ENCODE measurements at regions of chr9 and their contacts with region 1.

Region 1: DNA sequence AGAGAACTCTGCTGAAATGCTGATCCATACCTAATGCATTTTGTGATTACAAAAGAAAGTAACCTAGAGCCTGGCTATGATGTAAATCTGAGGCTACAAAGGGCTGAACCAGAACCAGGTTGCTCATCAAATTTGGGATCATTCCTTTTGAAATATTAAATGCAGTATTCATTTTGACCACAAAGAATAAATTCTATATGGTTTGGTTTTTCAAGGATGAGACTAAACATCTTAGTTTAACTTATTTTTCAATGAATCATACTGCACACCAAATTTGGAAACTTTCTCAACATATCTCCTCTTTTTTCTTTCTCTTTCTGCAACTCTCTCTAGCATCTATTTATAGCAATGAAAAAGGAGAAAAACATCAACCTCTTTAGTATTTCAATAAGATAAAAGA is 46.5 kb downstream of the CEMIP2 start:
- DNase-seq: no peak
- ATAC-seq: no peak

Region 2: DNA sequence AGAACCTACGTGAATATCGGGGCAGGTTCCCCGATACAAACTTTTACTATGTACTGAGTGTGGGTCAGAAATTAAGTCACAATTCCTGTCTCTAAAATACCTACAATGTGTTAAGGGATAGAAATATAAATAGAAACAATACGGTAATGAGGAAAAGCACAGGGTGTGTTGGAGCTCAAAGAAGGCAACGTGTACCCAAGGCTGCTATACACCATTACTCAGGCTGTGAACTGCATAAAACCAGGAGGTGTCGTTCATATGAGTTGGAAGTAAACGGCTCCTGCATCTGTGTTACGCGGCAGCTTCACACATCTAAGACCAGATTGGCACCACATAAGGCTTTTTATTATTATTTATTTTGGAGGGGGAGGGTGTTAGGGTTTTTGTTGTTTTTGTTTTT is 550.3 kb before region 1 on chr9:
- intact Hi-C with region 1: no loop called
- DNase-seq: no peak
- ATAC-seq: no peak

Region 3: GRCh38 chr9:71490810-71491209 is 231.0 kb before region 1 on chr9:
- intact Hi-C with region 1: no loop called
- DNase-seq: no peak
- ATAC-seq: no peak

Region 4: DNA sequence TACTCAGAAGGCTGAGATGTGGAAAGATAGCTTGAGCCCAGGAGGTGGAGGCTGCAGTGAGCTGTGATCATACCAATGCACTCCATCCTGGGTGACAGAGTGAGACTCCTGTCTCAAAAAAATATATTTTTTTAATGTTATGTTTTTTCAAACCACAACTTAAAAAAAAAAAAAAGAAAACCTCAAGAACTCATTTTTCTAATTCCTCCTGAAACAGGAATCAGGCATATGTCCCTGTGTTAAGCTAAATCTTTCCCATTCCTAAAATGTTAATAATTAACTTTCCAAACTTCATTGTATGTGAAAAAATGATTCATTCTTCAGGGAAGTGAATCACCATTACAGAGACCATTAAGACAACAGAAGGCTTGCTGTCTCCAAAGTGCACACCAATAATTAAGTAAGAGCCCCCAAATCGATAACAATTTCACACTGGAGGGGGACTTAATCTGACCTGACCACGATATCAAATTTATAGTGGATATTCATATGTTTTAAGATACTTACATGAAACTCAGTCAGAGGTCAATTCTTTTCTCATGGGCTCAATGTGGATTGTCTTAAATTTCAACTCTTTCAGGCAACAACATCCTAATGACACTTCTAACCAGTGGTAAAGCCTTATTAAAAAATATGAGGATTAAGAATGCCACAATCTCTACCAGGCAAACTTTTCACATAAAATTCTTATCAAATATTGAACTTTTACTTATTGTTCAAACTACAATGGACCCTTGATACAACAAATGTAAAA is 41.2 kb after region 1 on chr9:
- intact Hi-C with region 1: loop called (anchors 5 kb)
- DNase-seq: no peak
- ATAC-seq: no peak